Ascending aorta (tissue), 2 donors: ENCODE measurements at regions of chr22 and their contacts with region 1.

Region 1: GRCh38 chr22:29031227-29032011 is 30.2 kb downstream of the C22orf31 start:
- DNase-seq: peak; percentile 77 to 93
- H3K4me3 ChIP-seq: peak overlapping the region; percentile 57
- H3K27ac ChIP-seq: peak overlapping the region; percentile 92 to 97
- H3K4me1 ChIP-seq: peaks cover 16 to 29% of the 10 kb centered on the region in 2 donors
- H3K27me3 ChIP-seq: no peaks in the 10 kb centered on the region
- CTCF ChIP-seq: peak in 1 of 3 experiments; percentile 8

Region 2: GRCh38 chr22:28741758-28742561 is 289.5 kb before region 1 on chr22 and contains the starts of genes CHEK2 and HSCB:
- intact Hi-C with region 1: loop called (anchors 1 kb)
- DNase-seq: peak; percentile 96 to 99
- H3K4me3 ChIP-seq: peak within 1 kb of the TSS; percentile 65 to 98
- H3K27ac ChIP-seq: peak within 1 kb of the TSS; percentile 98 to 100
- H3K4me1 ChIP-seq: peaks cover 0 to 8% of the 10 kb centered on the region in 2 donors
- H3K27me3 ChIP-seq: no peaks in the 10 kb centered on the region
- CTCF ChIP-seq: no peak
- total RNA-seq, gene CHEK2: 1.3 TPM
- total RNA-seq, gene HSCB: 0.85 TPM

Region 3: GRCh38 chr22:28911777-28912669 is 119.4 kb before region 1 on chr22:
- intact Hi-C with region 1: loop called (anchors 2 kb)
- DNase-seq: no peak
- H3K4me3 ChIP-seq: peak overlapping the region in 1 of 2 donors; percentile 12
- H3K27ac ChIP-seq: peak overlapping the region; percentile 75 to 81
- H3K4me1 ChIP-seq: peaks cover 14 to 70% of the 10 kb centered on the region in 2 donors
- H3K27me3 ChIP-seq: no peaks in the 10 kb centered on the region
- CTCF ChIP-seq: no peak

Region 4: GRCh38 chr22:28951969-28952521 is 79.4 kb before region 1 on chr22:
- intact Hi-C with region 1: loop called (anchors 5 kb)
- DNase-seq: no peak
- H3K4me3 ChIP-seq: peak overlapping the region in 1 of 2 donors; percentile 9
- H3K27ac ChIP-seq: peak overlapping the region in 1 of 2 donors; percentile 62
- H3K4me1 ChIP-seq: peaks cover 8 to 40% of the 10 kb centered on the region in 2 donors
- H3K27me3 ChIP-seq: no peaks in the 10 kb centered on the region
- CTCF ChIP-seq: peak; percentile 17 to 49 (median 26)

Region 5: GRCh38 chr22:28976588-28976987 is 54.8 kb before region 1 on chr22:
- intact Hi-C with region 1: loop called (anchors 2 kb)
- DNase-seq: no peak
- H3K4me3 ChIP-seq: peak overlapping the region in 1 of 2 donors; percentile 41
- H3K27ac ChIP-seq: peak overlapping the region in 1 of 2 donors; percentile 53
- H3K4me1 ChIP-seq: peaks cover 6 to 20% of the 10 kb centered on the region in 2 donors
- H3K27me3 ChIP-seq: no peaks in the 10 kb centered on the region
- CTCF ChIP-seq: no peak

Region 6: GRCh38 chr22:29009148-29009547 is 22.3 kb before region 1 on chr22:
- intact Hi-C with region 1: loop called (anchors 1 kb)
- DNase-seq: no peak
- H3K4me3 ChIP-seq: no peak overlapping the region
- H3K27ac ChIP-seq: peak overlapping the region; percentile 35 to 74
- H3K4me1 ChIP-seq: peaks cover 8 to 38% of the 10 kb centered on the region in 2 donors
- H3K27me3 ChIP-seq: no peaks in the 10 kb centered on the region
- CTCF ChIP-seq: no peak